Ascending aorta (tissue), 2 donors: ENCODE measurements at regions of chr10 and their contacts with region 1.

Region 1: GRCh38 chr10:132331526-132332432 is at the start of gene LRRC27:
- DNase-seq: peak; percentile 93 to 99
- H3K4me3 ChIP-seq: peak within 1 kb of the TSS; percentile 81 to 87
- H3K27ac ChIP-seq: peak within 1 kb of the TSS; percentile 67 to 76
- H3K4me1 ChIP-seq: peaks cover 4 to 20% of the 10 kb centered on the region in 2 donors
- H3K27me3 ChIP-seq: no peaks in the 10 kb centered on the region
- CTCF ChIP-seq: no peak
- total RNA-seq, gene LRRC27: 2.0 TPM

Region 2: GRCh38 chr10:131900350-131901146 is 431.2 kb before region 1 on chr10 and contains the start of gene PPP2R2D:
- intact Hi-C with region 1: loop called (anchors 5 kb)
- DNase-seq: peak; percentile 66 to 95
- H3K4me3 ChIP-seq: peak within 1 kb of the TSS; percentile 85 to 98
- H3K27ac ChIP-seq: peak within 1 kb of the TSS; percentile 84 to 95
- H3K4me1 ChIP-seq: peaks cover 0 to 18% of the 10 kb centered on the region in 2 donors
- H3K27me3 ChIP-seq: no peaks in the 10 kb centered on the region
- CTCF ChIP-seq: no peak
- total RNA-seq, gene PPP2R2D: 11.8 TPM

Region 3: DNA sequence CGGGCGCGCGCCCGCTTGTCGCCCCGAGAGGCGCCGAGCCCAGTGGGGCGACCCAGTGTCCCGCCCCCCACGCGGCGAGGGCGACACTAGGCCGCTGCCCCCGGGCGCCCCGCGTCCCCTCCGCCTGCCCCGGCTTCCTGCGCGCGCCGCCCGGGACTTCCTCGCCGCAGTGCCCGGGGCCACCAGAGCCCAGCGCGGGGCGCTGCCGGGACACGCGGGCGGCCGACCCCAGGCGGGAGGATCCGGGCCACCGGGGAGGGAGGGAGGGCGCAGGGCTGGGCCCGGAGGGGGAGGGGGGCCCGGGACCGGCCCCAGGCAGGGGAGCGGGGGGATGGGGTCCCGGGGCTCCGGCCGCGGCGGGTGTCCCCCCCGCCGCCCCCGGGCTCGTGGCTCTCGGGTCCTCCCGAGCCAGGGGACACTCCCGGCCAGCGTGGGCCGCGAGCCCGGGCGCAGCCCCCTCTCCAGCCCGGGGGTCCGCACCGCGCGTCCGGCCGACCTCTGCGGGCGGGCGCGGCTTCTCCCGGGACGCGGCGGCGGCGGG is 64.8 kb after region 1 on chr10:
- intact Hi-C with region 1: loop called (anchors 5 kb)
- DNase-seq: peak in 1 of 2 donors; percentile 81
- H3K4me3 ChIP-seq: peak overlapping the region; percentile 74 to 90
- H3K27ac ChIP-seq: peak overlapping the region; percentile 91 to 95
- H3K4me1 ChIP-seq: peaks cover 3 to 26% of the 10 kb centered on the region in 2 donors
- H3K27me3 ChIP-seq: no peaks in the 10 kb centered on the region
- CTCF ChIP-seq: peak; percentile 13 to 53 (median 32)

Region 4: GRCh38 chr10:132516771-132517725 is 185.3 kb after region 1 on chr10:
- intact Hi-C with region 1: loop called (anchors 5 kb)
- DNase-seq: peak; percentile 87 to 98
- H3K4me3 ChIP-seq: peak overlapping the region; percentile 37 to 45
- H3K27ac ChIP-seq: peak overlapping the region; percentile 97
- H3K4me1 ChIP-seq: peaks cover 24 to 58% of the 10 kb centered on the region in 2 donors
- H3K27me3 ChIP-seq: no peaks in the 10 kb centered on the region
- CTCF ChIP-seq: no peak

Region 5: GRCh38 chr10:133378251-133379096 is 1046.7 kb after region 1 on chr10:
- intact Hi-C with region 1: loop called (anchors 2 kb)
- DNase-seq: peak in 1 of 2 donors; percentile 79
- H3K4me3 ChIP-seq: peak overlapping the region; percentile 87 to 98
- H3K27ac ChIP-seq: peak overlapping the region; percentile 61 to 82
- H3K4me1 ChIP-seq: peaks cover 4 to 13% of the 10 kb centered on the region in 2 donors
- H3K27me3 ChIP-seq: no peaks in the 10 kb centered on the region
- CTCF ChIP-seq: no peak